H1 (cell line): ENCODE measurements at regions of chr21 and their contacts with region 1.

Region 1: GRCh38 chr21:42913476-42913875 is 12.0 kb downstream of the ERVH48-1 start:
- DNase-seq: no peak
- H3K4me3 ChIP-seq: no peak overlapping the region
- H3K27ac ChIP-seq: no peak overlapping the region
- H3K4me1 ChIP-seq: no peaks in the 10 kb centered on the region
- H3K27me3 ChIP-seq: no peaks in the 10 kb centered on the region
- CTCF ChIP-seq: no peak
- EP300 ChIP-seq: no peak
- POLR2A ChIP-seq: no peak
- RAD21 ChIP-seq: no peak

Region 2: GRCh38 chr21:42892931-42893755 is 20.3 kb before region 1 on chr21 and contains the start of gene NDUFV3:
- CTCF ChIA-PET with region 1: interaction called, 4 read pairs
- POLR2A ChIA-PET with region 1: interaction called, 11 read pairs
- DNase-seq: peak; percentile 96 to 98
- H3K4me3 ChIP-seq: peak within 1 kb of the TSS; percentile 67 to 92 (median 86)
- H3K27ac ChIP-seq: peak within 1 kb of the TSS; percentile 84; the same call in 1 of the 2 replicates
- H3K4me1 ChIP-seq: no peaks in the 10 kb centered on the region
- H3K27me3 ChIP-seq: no peaks in the 10 kb centered on the region
- CTCF ChIP-seq: no peak
- EP300 ChIP-seq: peak in 1 of 2 experiments; percentile 40; a peak in 1 of 3 replicates
- POLR2A ChIP-seq: peak; percentile 56 to 91
- RAD21 ChIP-seq: no peak
- total RNA-seq, gene NDUFV3: 44.4 and 47.1 TPM in 2 replicates

Region 3: DNA sequence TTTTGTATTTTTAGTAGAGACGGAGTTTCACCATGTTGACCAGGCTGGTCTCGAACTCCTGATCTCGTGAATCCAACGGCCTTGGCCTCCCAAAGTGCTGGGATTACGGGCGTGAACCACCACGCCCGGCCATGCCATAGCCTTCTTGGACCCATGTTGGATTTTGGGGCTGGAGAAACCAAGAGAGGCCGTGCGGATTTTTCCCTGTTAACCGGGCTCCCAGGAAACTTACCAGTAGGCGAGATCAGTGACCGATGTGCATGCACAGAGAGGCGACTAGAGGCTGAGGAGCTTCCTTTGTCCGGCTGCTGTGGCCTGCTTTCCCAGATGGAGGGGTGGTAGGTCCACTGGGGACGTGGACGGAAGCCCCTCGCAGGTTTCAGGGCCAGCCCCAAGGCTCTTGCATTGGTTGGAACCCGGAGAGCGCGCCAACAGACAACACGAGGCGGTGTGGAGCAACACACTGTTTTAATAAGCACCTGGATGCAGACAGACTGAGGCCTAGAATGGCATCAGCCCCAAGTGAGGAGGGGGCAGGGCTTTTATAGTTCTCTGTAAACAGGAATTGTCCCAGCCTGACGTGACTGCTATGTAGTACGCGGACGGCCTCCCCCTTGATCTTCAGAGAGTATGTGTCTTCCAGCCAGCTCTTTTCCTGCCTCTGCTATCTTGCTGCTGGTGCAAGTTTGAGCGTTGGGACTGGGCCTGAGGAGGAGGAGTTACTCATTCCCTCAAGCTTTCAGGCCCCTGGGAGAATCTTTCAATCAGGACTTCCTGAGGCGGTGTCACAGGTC is 11.8 kb after region 1 on chr21 and contains the start of gene ERVH48-1:
- CTCF ChIA-PET with region 1: interaction called, 5 read pairs
- POLR2A ChIA-PET with region 1: interaction called, 16 read pairs
- DNase-seq: no peak
- H3K4me3 ChIP-seq: peak within 1 kb of the TSS in 2 of 4 experiments; percentile 15 to 19; a peak in 3 of 8 replicates
- H3K27ac ChIP-seq: peak within 1 kb of the TSS; percentile 62; the same call in 1 of the 2 replicates
- H3K4me1 ChIP-seq: peaks cover 11 to 18% (median 14%) of the 10 kb centered on the region in 4 experiments
- H3K27me3 ChIP-seq: no peaks in the 10 kb centered on the region
- CTCF ChIP-seq: no peak
- EP300 ChIP-seq: no peak
- POLR2A ChIP-seq: peak in 1 of 2 experiments; percentile 44; a peak in 1 of 3 replicates
- RAD21 ChIP-seq: no peak
- total RNA-seq, gene ERVH48-1: 14.9 and 17.7 TPM in 2 replicates